ENCODE measurements at regions of chr3 and their contacts with region 1.

Region 1: GRCh38 chr3:50321336-50322114 is 1.0 kb downstream of the HYAL2 start:
- DNase-seq: peak; percentile 88
- ATAC-seq: peak; percentile 82
- H3K4me3 Mint-ChIP-seq: peak overlapping the region; percentile 89
- H3K27ac Mint-ChIP-seq: peak overlapping the region; percentile 95
- H3K4me1 Mint-ChIP-seq: peaks cover 43% of the 10 kb centered on the region
- H3K27me3 Mint-ChIP-seq: no peaks in the 10 kb centered on the region

Region 2: GRCh38 chr3:50272911-50273693 is 48.4 kb before region 1 on chr3:
- CTCF ChIA-PET with region 1: interaction called, 14 read pairs
- POLR2A ChIA-PET with region 1: no interaction called
- DNase-seq: peak; percentile 93
- ATAC-seq: peak; percentile 90
- H3K4me3 Mint-ChIP-seq: peak overlapping the region; percentile 72
- H3K27ac Mint-ChIP-seq: peak overlapping the region; percentile 52
- H3K4me1 Mint-ChIP-seq: peaks cover 34% of the 10 kb centered on the region
- H3K27me3 Mint-ChIP-seq: peaks cover 40% of the 10 kb centered on the region

Region 3: GRCh38 chr3:50278868-50279224 is 42.7 kb before region 1 on chr3 and contains the start of gene LSMEM2:
- CTCF ChIA-PET with region 1: interaction called, 14 read pairs
- POLR2A ChIA-PET with region 1: no interaction called
- DNase-seq: no peak
- ATAC-seq: no peak
- H3K4me3 Mint-ChIP-seq: no peak within 1 kb of the TSS
- H3K27ac Mint-ChIP-seq: no peak within 1 kb of the TSS
- H3K4me1 Mint-ChIP-seq: peaks cover 20% of the 10 kb centered on the region
- H3K27me3 Mint-ChIP-seq: peaks cover 38% of the 10 kb centered on the region
- total RNA-seq, gene LSMEM2: not detected

Region 4: GRCh38 chr3:50298836-50299637 is 22.5 kb before region 1 on chr3 and contains the starts of genes HYAL3 and NAA80:
- CTCF ChIA-PET with region 1: interaction called, 113 read pairs
- POLR2A ChIA-PET with region 1: interaction called, 14 read pairs
- DNase-seq: peak; percentile 100
- ATAC-seq: peak; percentile 87
- H3K4me3 Mint-ChIP-seq: peak within 1 kb of the TSS; percentile 97
- H3K27ac Mint-ChIP-seq: peak within 1 kb of the TSS; percentile 99
- H3K4me1 Mint-ChIP-seq: peaks cover 32% of the 10 kb centered on the region
- H3K27me3 Mint-ChIP-seq: no peaks in the 10 kb centered on the region
- total RNA-seq, gene HYAL3: 9.7 to 12.7 TPM
- total RNA-seq, gene NAA80: 26.8 to 28.5 TPM

Region 5: GRCh38 chr3:50639055-50639494 is 317.6 kb after region 1 on chr3:
- CTCF ChIA-PET with region 1: no interaction called
- POLR2A ChIA-PET with region 1: no interaction called
- DNase-seq: no peak
- ATAC-seq: no peak
- H3K4me3 Mint-ChIP-seq: no peak overlapping the region
- H3K27ac Mint-ChIP-seq: peak overlapping the region; percentile 81
- H3K4me1 Mint-ChIP-seq: peaks cover 43% of the 10 kb centered on the region
- H3K27me3 Mint-ChIP-seq: no peaks in the 10 kb centered on the region